ENCODE measurements at regions of chr2 and their contacts with region 1.

Region 1: GRCh38 chr2:230987137-230988020 is 8.5 kb upstream of the SPATA3 start:
- DNase-seq: peak; percentile 90

Region 2: GRCh38 chr2:230824406-230824978 is 162.9 kb before region 1 on chr2:
- intact Hi-C with region 1: loop called (anchors 2 kb)
- DNase-seq: no peak

Region 3: DNA sequence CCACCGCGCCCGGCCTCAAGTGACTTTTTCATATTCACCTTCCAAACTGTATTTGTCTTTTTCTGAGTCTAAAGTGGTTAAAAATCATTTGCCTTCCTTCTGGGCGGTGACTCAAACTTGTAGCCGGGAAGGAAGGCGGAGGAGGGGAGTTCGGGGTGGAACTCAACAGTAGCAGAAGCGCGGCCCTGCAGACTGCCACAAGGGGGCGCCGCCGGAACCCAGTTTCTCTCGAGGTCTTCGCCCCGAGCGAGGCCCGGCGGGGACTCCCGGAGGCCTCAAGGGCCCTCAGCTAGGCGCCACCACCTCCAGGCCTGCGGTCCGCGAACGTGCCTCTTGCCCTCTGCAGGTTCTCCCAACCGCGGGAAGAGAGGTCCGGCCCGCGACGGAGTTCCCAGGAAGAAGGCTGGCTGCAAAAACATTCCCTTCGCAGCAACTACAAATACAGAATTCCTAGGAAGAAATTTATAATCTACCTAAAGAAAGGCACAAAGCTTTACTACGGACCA is 139.4 kb before region 1 on chr2:
- intact Hi-C with region 1: loop called (anchors 1 kb)
- DNase-seq: peak; percentile 90

Region 4: GRCh38 chr2:230902180-230902899 is 85.0 kb before region 1 on chr2:
- intact Hi-C with region 1: loop called (anchors 5 kb)
- DNase-seq: peak; percentile 51

Region 5: DNA sequence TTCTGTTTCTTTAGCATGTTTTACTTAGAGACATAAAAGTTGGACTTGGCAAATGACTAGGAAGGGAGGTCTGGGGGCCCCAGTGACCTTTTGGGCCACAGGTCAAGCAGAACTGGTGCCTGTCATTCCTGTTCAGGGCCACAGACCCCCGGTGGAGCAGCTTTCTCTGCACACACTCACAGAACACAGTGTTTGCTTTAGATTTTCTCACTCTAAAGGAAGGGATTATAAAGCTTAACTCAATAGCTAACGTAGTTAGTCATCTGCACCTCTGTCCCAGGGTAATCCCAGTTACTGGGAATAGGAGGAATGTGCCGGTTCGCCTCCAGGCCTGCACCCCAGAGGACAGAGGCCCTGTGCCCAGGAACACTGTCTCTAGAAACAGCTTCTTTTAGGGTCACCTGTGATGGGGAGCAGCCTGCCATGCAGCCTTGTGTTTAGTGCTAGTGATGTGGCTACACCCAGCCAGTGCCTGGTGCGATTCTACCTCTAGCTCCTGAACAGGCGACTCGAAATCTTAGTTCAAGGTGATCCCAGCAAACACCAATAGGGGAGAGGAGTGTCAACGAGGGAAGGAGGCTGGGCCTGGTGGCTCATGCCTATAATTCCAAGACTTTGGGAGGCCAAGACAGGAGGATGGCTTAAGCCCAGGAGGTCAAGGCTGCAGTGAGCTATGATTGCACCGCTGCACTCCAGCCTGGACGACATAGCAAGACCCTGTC is 20.1 kb after region 1 on chr2:
- intact Hi-C with region 1: no loop called
- DNase-seq: no peak

Measured in cardiac septum (tissue), 1 donor.